ENCODE measurements at regions of chr1 and their contacts with region 1.

Region 1: DNA sequence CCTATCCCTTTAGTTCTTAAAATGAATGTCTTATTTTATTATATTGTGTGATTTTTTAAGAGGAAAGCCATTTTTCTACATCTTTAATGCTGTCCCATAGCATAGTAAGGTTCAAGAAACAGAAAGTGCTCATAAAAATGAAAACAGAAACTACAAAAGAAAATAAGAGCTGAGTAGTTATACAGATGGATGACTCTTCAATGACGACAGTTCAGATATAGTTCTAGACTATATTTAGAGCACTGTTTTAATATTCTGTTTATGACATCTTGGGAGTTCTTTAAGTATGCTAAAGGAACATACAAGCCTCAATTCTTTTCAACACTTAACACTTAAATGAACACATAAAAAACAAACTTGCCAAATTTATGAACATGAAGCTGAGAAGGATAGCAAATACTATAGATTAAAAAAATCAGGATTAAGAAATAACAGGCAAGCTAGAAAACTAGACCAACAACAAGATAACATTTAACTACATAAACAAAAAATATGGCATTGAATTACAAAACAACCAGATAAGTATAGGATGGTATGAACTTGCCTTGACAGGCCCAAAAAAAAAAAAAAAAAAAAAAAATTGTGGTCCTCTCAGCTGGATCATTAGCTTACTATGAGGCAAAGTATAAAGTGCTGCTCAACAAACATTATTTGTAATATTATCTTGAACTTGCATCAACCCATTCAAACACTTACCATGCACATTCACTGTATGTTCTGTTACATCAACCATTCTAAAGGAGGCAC is 87.9 kb downstream of the ZZZ3 start:
- DNase-seq: no peak
- H3K4me3 ChIP-seq: no peak overlapping the region
- H3K27ac ChIP-seq: no peak overlapping the region
- H3K4me1 ChIP-seq: peaks cover 0 to 9% (median 8%) of the 10 kb centered on the region in 4 donors
- H3K27me3 ChIP-seq: no peaks in the 10 kb centered on the region
- CTCF ChIP-seq: no peak
- EP300 ChIP-seq: no peak
- POLR2A ChIP-seq: no peak

Region 2: DNA sequence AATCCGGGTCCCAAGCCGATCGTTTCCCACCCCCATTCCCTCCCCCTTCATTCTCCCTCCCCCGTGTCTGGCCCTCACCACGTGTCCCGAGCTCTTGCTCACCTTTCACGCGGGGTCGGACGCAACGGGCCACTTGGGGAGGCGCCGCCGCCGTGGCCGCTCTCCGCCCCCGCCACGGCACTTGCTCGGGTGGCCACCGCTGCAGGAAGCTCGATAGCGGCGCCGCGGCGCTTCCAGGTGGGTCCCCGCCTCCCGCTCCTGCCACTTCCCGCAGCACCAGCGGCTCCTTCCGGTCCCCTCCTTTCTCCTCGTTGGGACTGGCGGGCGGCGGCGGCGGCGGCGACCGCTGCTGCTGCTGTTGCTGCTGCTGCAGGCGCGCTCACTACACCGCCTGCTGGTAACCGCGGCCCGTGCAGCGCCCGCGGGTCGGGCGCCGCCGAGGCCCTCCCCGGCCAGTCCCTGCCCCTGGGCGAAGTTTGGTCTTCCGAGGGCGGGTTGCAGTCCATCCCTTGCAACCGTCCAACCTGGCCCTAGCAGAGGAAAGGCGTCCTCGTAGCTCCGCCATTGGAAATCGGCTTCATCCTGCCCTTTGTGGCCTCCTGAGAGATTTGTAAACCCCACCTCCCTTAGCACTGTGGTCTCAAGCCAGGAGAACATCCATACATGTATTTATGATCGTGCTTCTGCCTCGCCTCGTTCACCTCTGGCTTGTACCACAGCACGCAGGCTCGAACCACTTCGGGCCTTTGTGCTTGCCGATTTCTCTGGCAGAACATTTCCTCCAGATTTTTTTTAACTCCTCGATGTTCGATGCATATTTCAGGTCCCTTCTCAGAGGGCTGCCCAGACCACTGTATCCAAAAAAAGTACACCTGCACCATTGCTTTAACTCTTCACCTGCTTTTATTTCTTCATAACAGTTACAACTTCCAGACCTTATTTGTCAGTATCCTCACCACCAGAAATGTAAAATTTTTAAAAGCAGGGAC is 88.9 kb after region 1 on chr1:
- intact Hi-C with region 1: loop called (anchors 10 kb)
- DNase-seq: peak; percentile 96
- H3K4me3 ChIP-seq: peak overlapping the region; percentile 74 to 95 (median 80)
- H3K27ac ChIP-seq: peak overlapping the region; percentile 87 to 96 (median 94)
- H3K4me1 ChIP-seq: peaks cover 18 to 48% (median 47%) of the 10 kb centered on the region in 4 donors
- H3K27me3 ChIP-seq: no peaks in the 10 kb centered on the region
- CTCF ChIP-seq: peak in 2 of 3 experiments; percentile 89 to 91
- EP300 ChIP-seq: no peak
- POLR2A ChIP-seq: peak; percentile 4